ENCODE measurements at regions of chr9 and their contacts with region 1.

Region 1: DNA sequence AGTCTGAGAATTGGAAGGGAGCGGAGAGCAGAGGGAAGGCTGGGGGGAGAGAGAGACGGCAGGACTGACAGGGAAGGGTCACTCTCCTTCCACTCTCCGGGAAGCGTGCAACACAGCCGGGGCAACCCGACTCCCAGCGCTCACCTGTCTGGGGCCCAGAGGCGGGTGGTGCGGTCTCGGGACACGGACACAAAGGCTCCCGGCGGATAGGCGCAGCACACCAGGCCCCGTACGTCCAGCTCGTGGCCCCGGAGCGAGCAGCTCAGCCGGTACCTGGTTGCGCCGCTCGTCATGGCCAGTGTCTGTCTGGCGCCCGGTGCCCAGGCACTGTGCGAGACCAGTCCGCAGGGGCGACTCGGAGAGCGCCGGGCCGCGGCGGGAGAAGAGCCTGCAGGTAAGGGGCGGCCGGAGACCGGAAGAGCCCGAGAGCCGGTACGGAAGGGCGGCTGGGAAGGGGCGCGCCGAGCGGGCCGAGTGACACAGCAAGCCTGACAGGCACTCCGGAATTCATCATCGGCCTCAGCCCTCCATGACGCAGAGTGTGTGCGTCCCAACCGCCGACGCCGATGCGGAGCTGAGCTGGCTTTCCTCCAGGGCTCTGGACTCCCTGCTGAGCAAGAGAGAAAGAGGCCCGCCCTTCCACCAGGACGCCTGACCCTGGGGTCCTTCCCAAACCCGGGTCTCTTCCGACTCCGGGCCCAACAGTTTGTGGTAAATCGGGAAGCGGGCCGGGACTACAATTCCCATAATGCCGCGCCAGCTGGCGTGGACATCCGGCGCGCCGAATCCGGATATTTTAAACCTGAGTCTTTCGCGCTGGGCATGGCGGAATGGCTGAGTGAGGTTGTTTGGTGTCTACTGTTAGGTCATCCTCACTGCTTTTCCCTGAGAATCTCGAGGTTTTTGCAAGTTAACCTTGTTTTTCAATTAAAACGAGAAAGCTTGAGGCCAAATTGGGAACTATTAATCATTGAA is at the start of gene PLAA:
- DNase-seq: peak; percentile 92 to 95 (median 93)
- ATAC-seq: peak; percentile 98 to 99 (median 98)
- H3K4me3 ChIP-seq: peak within 1 kb of the TSS; percentile 85 to 94 (median 93)
- H3K27ac ChIP-seq: peak within 1 kb of the TSS; percentile 92 to 98 (median 97)
- H3K4me1 ChIP-seq: peaks cover 0 to 15% (median 3%) of the 10 kb centered on the region in 4 donors
- H3K27me3 ChIP-seq: no peaks in the 10 kb centered on the region
- CTCF ChIP-seq: peak in 2 of 4 donors; percentile 5 to 18
- POLR2A ChIP-seq: peak; percentile 78
- total RNA-seq, gene PLAA: 10.7 to 26.1 (median 16.8) TPM

Region 2: GRCh38 chr9:26516773-26517343 is 430.2 kb before region 1 on chr9:
- intact Hi-C with region 1: no loop called
- DNase-seq: no peak
- ATAC-seq: no peak
- H3K4me3 ChIP-seq: no peak overlapping the region
- H3K27ac ChIP-seq: no peak overlapping the region
- H3K4me1 ChIP-seq: no peaks in the 10 kb centered on the region
- H3K27me3 ChIP-seq: no peaks in the 10 kb centered on the region
- CTCF ChIP-seq: no peak
- POLR2A ChIP-seq: no peak

Region 3: GRCh38 chr9:26892251-26893029 is 54.6 kb before region 1 on chr9 and contains the start of gene CAAP1:
- intact Hi-C with region 1: loop called in 1 of 2 experiments (anchors 10 kb)
- DNase-seq: peak; percentile 95 to 96 (median 95)
- ATAC-seq: peak; percentile 94 to 97 (median 96)
- H3K4me3 ChIP-seq: peak within 1 kb of the TSS; percentile 84 to 97 (median 94)
- H3K27ac ChIP-seq: peak within 1 kb of the TSS; percentile 83 to 96 (median 92)
- H3K4me1 ChIP-seq: peaks cover 0 to 11% (median 0%) of the 10 kb centered on the region in 4 donors
- H3K27me3 ChIP-seq: no peaks in the 10 kb centered on the region
- CTCF ChIP-seq: peak; percentile 17 to 44 (median 30)
- POLR2A ChIP-seq: peak; percentile 94
- total RNA-seq, gene CAAP1: 9.3 to 22.8 (median 13.4) TPM

Region 4: DNA sequence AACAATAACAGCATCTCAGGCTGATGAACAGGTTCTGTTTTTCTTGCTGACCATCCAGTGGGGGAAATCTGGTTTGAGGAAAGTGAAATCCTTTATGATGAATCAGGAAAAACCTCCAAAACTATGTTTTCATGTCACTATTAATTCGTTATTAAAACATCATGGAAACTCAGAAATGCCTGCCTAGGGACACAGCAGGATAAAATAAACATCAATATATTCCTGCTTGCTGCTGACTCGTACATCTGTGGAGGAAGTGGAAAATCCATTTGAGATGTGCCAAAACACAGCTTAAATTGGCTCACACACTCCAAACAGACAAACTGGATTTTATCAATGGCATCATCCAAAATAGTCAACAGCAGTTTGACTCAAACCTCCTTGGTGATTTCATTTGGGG is 215.0 kb after region 1 on chr9:
- intact Hi-C with region 1: no loop called
- DNase-seq: no peak
- ATAC-seq: no peak
- H3K4me3 ChIP-seq: no peak overlapping the region
- H3K27ac ChIP-seq: no peak overlapping the region
- H3K4me1 ChIP-seq: no peaks in the 10 kb centered on the region
- H3K27me3 ChIP-seq: no peaks in the 10 kb centered on the region
- CTCF ChIP-seq: no peak
- POLR2A ChIP-seq: no peak

Measured in right lobe of liver (tissue), 6 donors.